Panc1 (cell line): ENCODE measurements at regions of chr19 and their contacts with region 1.

Region 1: DNA sequence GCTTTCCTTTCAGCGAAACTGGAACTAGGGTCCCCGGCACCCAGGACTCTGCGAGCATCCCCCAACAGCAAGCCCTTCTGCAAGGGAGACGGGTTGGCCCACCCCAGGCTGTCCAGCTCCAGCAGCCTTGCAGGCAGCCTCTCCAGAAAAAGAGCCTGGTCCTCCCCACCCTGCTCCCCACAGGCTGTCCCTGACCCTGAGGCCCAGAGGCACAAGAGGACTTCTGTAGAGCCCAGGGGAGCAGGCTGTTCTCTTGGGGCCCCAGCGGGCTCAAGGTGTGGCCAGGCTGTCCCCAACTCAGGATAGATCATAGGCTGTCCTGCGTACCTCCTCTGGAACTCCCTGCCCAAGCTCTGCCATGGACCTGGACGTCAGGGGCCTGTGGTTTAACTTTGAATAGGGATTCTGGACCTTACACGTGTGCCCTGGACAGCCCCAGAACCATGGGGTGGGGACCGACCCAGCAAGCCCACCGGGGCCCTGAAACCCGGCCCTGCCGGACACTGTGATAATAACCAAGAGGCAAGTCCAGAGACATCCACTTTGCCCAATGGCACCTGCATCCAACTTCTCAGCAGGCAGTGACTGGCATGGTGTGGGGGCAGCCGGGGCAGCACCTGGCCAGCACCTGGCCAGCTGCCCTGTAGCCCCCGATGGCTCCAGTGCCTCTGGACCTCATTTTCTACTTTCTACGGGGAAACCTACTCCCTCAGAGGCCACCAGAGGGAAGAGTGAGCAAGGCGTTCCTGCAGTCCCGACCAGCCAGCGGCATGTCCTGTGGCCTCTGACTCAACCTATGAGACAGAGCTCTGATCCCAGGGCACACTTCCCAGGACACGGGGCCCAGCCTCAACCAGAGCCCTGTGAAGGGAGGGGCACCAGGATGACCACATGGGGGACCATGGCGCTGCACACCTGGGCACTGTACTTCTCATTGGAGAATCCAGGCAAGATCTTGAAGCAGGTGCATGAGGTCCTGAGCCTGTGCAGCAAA is 50.9 kb upstream of the TPM4 start:
- DNase-seq: peak; percentile 28
- ATAC-seq: peak; percentile 93
- H3K4me3 ChIP-seq: no peak overlapping the region
- H3K27ac ChIP-seq: no peak overlapping the region
- H3K4me1 ChIP-seq: no peaks in the 10 kb centered on the region; the same call in 1 of the 2 replicates
- H3K27me3 ChIP-seq: no peaks in the 10 kb centered on the region
- CTCF ChIP-seq: no peak

Region 2: DNA sequence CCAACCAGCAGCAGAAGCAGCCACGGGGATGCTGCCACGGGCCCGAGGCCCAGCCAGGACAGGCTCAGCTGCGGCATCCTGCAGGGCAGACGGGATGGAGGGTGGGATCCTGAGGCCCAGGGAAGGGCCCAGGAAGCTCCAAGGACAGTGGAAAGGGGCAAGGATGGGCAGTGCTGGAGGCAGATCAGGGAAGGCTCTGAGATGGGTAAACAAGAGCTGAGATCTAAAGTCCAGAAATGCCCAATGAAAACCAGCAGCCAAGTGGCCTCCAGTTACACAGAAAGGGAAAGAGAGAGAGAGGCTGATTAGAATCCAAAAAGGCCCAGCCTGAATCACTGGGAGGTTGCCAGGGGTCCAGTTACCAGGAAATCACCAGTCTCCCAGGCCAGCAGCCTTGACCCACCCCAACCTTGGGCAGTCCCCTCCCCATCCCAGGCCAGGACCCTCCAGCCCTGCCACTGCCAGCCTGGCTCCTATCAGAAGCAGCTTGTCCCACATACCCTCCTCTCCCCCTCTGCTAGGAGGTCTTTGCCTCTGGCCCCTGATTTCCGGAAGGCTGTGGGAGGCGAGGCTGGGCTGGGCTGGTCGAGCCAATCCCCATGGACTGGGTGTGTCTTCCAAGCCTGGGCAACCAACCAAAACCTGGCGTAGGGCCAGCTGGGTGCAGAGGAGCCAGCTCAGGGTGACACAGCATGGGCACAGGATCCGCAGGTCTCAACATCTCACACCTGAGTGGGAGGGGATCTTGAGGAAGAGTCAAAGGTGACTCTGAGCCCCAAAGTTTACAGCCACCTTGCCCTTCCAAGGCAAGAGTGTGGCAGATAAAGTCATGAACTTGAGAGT is 90.9 kb before region 1 on chr19 and contains the start of gene CYP4F11:
- CTCF ChIA-PET with region 1: no interaction called
- POLR2A ChIA-PET with region 1: no interaction called
- in situ Hi-C with region 1: no loop called
- intact Hi-C with region 1: no loop called
- DNase-seq: no peak
- ATAC-seq: peak; percentile 78
- H3K4me3 ChIP-seq: no peak within 1 kb of the TSS
- H3K27ac ChIP-seq: no peak within 1 kb of the TSS
- H3K4me1 ChIP-seq: no peaks in the 10 kb centered on the region
- H3K27me3 ChIP-seq: no peaks in the 10 kb centered on the region
- CTCF ChIP-seq: no peak
- total RNA-seq, gene CYP4F11: 0.21 TPM

Region 3: GRCh38 chr19:15971222-15971780 is 54.1 kb before region 1 on chr19:
- CTCF ChIA-PET with region 1: no interaction called
- POLR2A ChIA-PET with region 1: interaction called, 13 read pairs
- in situ Hi-C with region 1: no loop called
- intact Hi-C with region 1: no loop called
- DNase-seq: no peak
- ATAC-seq: no peak
- H3K4me3 ChIP-seq: no peak overlapping the region
- H3K27ac ChIP-seq: no peak overlapping the region
- H3K4me1 ChIP-seq: no peaks in the 10 kb centered on the region
- H3K27me3 ChIP-seq: no peaks in the 10 kb centered on the region; the same call in 1 of the 2 replicates
- CTCF ChIP-seq: peak; percentile 19